Activated CD4-positive, alpha-beta memory T cell treated with anti-CD3 and anti-CD28 coated beads, Interleukin-2, amount 10 ng/mL, durations not matched to agents 7 days and 5 days (primary cell): ENCODE measurements at regions of chr7 and their contacts with region 1.

Region 1: GRCh38 chr7:30983042-30983913 is 19.5 kb downstream of the GHRHR start:
- DNase-seq: peak; percentile 78
- H3K4me3 Mint-ChIP-seq: no peak overlapping the region
- H3K27ac Mint-ChIP-seq: no peak overlapping the region
- H3K4me1 Mint-ChIP-seq: peaks cover 19% of the 10 kb centered on the region
- H3K27me3 Mint-ChIP-seq: peaks cover 16% of the 10 kb centered on the region

Region 2: DNA sequence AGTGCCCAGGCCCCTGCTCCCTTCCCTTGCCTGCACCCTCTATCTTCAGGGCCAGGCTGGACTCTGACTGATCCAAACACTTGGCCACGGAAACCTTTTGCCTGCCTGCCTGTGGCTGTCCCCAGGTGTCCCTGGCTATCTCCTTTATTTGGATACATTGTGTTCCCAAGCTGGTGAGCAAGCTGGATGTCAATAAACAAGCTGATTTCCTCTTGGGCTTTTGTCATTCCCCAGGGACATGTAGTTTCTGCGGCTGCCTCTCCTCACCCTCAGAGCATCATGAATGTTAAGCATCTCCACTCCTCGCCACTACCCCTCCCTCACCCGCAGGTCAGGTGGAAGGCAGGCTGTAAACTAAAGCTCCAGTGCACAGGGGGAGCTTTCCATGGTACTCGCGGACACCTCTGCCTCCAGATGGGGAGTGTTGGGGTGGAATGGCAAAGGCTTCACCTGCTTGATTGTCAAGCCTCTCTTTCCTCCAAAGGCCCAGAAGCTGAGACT is 12.6 kb before region 1 on chr7:
- CTCF ChIA-PET with region 1: interaction called, 11 read pairs
- POLR2A ChIA-PET with region 1: no interaction called
- DNase-seq: no peak
- H3K4me3 Mint-ChIP-seq: no peak overlapping the region
- H3K27ac Mint-ChIP-seq: no peak overlapping the region
- H3K4me1 Mint-ChIP-seq: peaks cover 10% of the 10 kb centered on the region
- H3K27me3 Mint-ChIP-seq: peaks cover 14% of the 10 kb centered on the region

Region 3: GRCh38 chr7:31122649-31123058 is 139.4 kb after region 1 on chr7:
- CTCF ChIA-PET with region 1: interaction called, 259 read pairs
- POLR2A ChIA-PET with region 1: interaction called, 5 read pairs
- DNase-seq: peak; percentile 51
- H3K4me3 Mint-ChIP-seq: no peak overlapping the region
- H3K27ac Mint-ChIP-seq: no peak overlapping the region
- H3K4me1 Mint-ChIP-seq: no peaks in the 10 kb centered on the region
- H3K27me3 Mint-ChIP-seq: peaks cover 6% of the 10 kb centered on the region

Region 4: GRCh38 chr7:31134246-31135188 is 151.2 kb after region 1 on chr7:
- CTCF ChIA-PET with region 1: interaction called, 22 read pairs
- POLR2A ChIA-PET with region 1: no interaction called
- DNase-seq: peak; percentile 45
- H3K4me3 Mint-ChIP-seq: no peak overlapping the region
- H3K27ac Mint-ChIP-seq: no peak overlapping the region
- H3K4me1 Mint-ChIP-seq: no peaks in the 10 kb centered on the region
- H3K27me3 Mint-ChIP-seq: no peaks in the 10 kb centered on the region